ENCODE measurements at regions of chr6 and their contacts with region 1.

Region 1: DNA sequence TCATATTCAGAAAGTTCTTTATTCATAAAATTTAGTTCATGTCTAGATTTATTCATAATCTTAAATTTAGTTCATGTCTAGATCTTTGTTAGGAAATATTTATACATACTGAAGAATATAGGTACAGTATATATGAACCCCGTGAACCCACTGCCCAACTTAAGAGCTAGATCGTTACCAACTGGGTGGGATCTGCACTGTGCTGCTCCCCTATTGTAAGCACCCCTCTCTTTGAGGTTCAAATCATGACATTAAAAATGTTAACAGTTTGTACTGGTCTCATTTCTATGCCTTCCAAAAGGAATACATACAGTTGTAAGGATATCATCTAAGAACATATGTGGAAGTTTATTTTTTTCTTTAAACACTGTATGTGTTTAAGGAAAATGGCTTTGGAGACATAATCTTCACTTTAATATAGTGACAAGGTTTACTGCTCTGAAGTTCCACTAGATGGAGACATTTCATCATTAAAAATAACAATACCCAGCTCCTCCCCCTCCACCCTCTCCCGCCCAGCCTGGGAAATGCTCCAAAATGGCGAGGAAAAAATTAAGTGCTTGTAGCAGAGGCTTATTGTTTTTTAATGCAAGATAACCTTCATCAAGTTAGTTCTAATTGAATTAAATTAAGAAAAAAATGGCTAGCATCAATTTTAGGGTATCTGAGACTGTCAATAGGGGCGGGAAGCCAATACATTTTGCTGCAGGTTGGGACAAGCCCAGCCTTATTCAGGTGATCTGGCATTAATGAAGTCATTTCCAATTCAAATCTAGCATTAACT is 104.1 kb upstream of the TRAF3IP2 start:
- DNase-seq: peak; percentile 78
- H3K4me3 ChIP-seq: peak overlapping the region in 1 of 2 experiments; percentile 0; a peak in 1 of 4 replicates
- H3K27ac ChIP-seq: peak overlapping the region in 1 of 2 experiments; percentile 60; a peak in 2 of 4 replicates
- H3K4me1 ChIP-seq: peaks cover 5 to 27% of the 10 kb centered on the region in 2 experiments; a peak in 2 of 4 replicates
- H3K27me3 ChIP-seq: no peaks in the 10 kb centered on the region
- CTCF ChIP-seq: peak; percentile 79
- EP300 ChIP-seq: peak in 1 of 2 experiments; percentile 23; a peak in 1 of 4 replicates
- RAD21 ChIP-seq: peak; percentile 94

Region 2: GRCh38 chr6:111306104-111306888 is 403.5 kb before region 1 on chr6:
- CTCF ChIA-PET with region 1: no interaction called
- POLR2A ChIA-PET with region 1: no interaction called
- DNase-seq: no peak
- H3K4me3 ChIP-seq: no peak overlapping the region
- H3K27ac ChIP-seq: no peak overlapping the region
- H3K4me1 ChIP-seq: no peaks in the 10 kb centered on the region
- H3K27me3 ChIP-seq: no peaks in the 10 kb centered on the region
- CTCF ChIP-seq: no peak
- EP300 ChIP-seq: no peak
- RAD21 ChIP-seq: no peak

Region 3: GRCh38 chr6:111427341-111428116 is 282.3 kb before region 1 on chr6:
- CTCF ChIA-PET with region 1: no interaction called
- POLR2A ChIA-PET with region 1: no interaction called
- DNase-seq: no peak
- H3K4me3 ChIP-seq: peak overlapping the region; percentile 0 to 27
- H3K27ac ChIP-seq: peak overlapping the region in 1 of 2 experiments; percentile 80; a peak in 3 of 4 replicates
- H3K4me1 ChIP-seq: peaks cover 11 to 16% of the 10 kb centered on the region in 2 experiments; a peak in 3 of 4 replicates
- H3K27me3 ChIP-seq: no peaks in the 10 kb centered on the region
- CTCF ChIP-seq: no peak
- EP300 ChIP-seq: peak; percentile 63 to 69; a peak in 3 of 4 replicates
- RAD21 ChIP-seq: no peak

Region 4: DNA sequence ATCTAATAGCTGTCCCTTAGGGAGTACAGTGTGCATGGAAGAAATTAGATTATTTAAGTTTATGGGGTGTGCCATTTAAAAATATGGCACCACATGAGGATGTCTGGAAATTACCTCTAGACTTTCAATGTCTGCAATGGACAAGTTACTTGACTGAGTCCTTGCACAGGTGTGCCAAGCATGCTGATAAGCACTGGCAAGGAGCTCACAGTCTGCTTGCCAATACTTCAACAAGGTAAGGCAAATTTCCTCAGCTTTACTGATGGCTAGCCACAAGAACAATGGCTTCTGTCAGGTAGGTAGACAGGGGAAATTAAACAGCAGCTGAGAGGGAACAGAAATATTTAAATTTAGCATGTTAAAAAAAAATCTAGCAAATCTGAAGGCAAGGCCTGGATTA is 13.0 kb before region 1 on chr6:
- CTCF ChIA-PET with region 1: interaction called, 14 read pairs
- POLR2A ChIA-PET with region 1: no interaction called
- DNase-seq: no peak
- H3K4me3 ChIP-seq: no peak overlapping the region
- H3K27ac ChIP-seq: no peak overlapping the region; a peak in 1 of 4 replicates
- H3K4me1 ChIP-seq: peaks cover 0 to 24% of the 10 kb centered on the region in 2 experiments; a peak in 2 of 4 replicates
- H3K27me3 ChIP-seq: no peaks in the 10 kb centered on the region
- CTCF ChIP-seq: no peak
- EP300 ChIP-seq: no peak
- RAD21 ChIP-seq: no peak

Region 5: DNA sequence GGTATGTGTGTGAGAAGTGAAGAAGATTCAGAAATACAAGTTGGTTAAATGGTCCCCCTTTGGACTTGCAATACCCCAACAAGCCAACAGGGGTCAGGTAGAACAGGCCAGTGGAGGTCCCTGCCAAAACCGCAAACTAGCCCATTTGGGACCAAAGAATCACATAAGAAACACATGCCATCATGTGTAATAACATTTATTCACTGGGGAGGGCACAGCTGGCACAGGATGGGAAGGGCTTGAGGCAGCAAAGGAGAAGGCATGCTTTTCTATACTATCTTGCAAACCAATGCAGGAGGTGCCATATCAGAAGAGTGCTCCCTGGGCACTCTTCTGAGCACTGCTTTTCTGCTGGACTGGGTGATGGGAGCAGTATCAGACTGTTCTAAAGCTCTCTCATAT is 11.9 kb after region 1 on chr6:
- CTCF ChIA-PET with region 1: interaction called, 15 read pairs
- POLR2A ChIA-PET with region 1: no interaction called
- DNase-seq: peak; percentile 43
- H3K4me3 ChIP-seq: no peak overlapping the region
- H3K27ac ChIP-seq: no peak overlapping the region
- H3K4me1 ChIP-seq: peaks cover 2 to 4% of the 10 kb centered on the region in 2 experiments; a peak in 2 of 4 replicates
- H3K27me3 ChIP-seq: no peaks in the 10 kb centered on the region
- CTCF ChIP-seq: peak; percentile 64
- EP300 ChIP-seq: no peak
- RAD21 ChIP-seq: peak; percentile 59

Region 6: GRCh38 chr6:111997078-111997852 is 287.5 kb after region 1 on chr6:
- CTCF ChIA-PET with region 1: interaction called, 37 read pairs
- POLR2A ChIA-PET with region 1: no interaction called
- DNase-seq: peak; percentile 76
- H3K4me3 ChIP-seq: peak overlapping the region in 1 of 2 experiments; percentile 40; a peak in 1 of 4 replicates
- H3K27ac ChIP-seq: no peak overlapping the region
- H3K4me1 ChIP-seq: peaks cover 4 to 12% of the 10 kb centered on the region in 2 experiments; a peak in 1 of 4 replicates
- H3K27me3 ChIP-seq: no peaks in the 10 kb centered on the region
- CTCF ChIP-seq: peak; percentile 90
- EP300 ChIP-seq: no peak
- RAD21 ChIP-seq: peak; percentile 99

Region 7: DNA sequence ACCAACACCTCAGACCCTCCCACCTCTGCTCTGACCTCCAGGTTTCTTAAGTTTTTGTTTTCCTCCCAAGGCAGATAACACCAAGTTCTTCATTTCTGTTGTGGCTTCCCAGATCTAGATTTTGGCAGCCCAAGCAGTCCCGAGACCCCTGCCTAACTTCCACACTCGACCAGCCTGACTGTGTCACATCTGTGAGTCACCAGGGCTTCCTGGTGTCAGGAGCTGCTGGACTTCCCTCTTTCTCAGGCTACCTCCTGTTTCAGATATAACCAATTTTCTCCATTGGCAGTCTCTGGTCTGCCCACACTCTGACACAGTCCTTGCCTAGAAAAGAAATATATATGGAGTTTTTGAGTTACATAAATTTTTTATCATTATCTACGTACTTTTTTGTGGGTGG is 298.0 kb after region 1 on chr6:
- CTCF ChIA-PET with region 1: interaction called, 10 read pairs
- POLR2A ChIA-PET with region 1: no interaction called
- DNase-seq: no peak
- H3K4me3 ChIP-seq: no peak overlapping the region
- H3K27ac ChIP-seq: no peak overlapping the region
- H3K4me1 ChIP-seq: no peaks in the 10 kb centered on the region; a peak in 1 of 4 replicates
- H3K27me3 ChIP-seq: no peaks in the 10 kb centered on the region
- CTCF ChIP-seq: no peak
- EP300 ChIP-seq: no peak
- RAD21 ChIP-seq: no peak

Region 8: GRCh38 chr6:112029045-112029822 is 319.4 kb after region 1 on chr6:
- CTCF ChIA-PET with region 1: interaction called, 17 read pairs
- POLR2A ChIA-PET with region 1: no interaction called
- DNase-seq: peak; percentile 39
- H3K4me3 ChIP-seq: no peak overlapping the region
- H3K27ac ChIP-seq: no peak overlapping the region
- H3K4me1 ChIP-seq: peaks cover 8 to 10% of the 10 kb centered on the region in 2 experiments; a peak in 2 of 4 replicates
- H3K27me3 ChIP-seq: no peaks in the 10 kb centered on the region
- CTCF ChIP-seq: peak; percentile 79
- EP300 ChIP-seq: no peak
- RAD21 ChIP-seq: peak; percentile 59

Measured in SK-N-SH (cell line).